ENCODE measurements at regions of chr18 and their contacts with region 1.

Region 1: DNA sequence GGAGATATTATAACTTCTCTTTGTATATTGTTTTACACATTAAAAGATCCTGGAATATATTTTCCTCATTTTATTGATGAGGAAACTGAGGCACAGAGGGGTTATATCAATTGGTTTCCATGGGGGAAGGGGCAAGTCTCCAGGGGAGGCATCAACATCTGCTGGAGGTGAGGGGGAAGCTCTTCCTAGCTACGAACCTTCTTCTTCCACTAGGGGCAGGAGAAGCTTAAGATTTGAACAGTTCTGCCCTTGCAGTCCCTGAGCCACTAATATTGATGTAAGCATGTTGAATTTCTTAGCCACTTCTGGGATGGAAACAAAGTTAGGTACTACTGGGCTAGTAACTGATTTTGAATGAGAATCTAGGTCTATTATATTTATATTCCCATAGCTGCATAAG is 140.1 kb upstream of the AQP4 start:
- DNase-seq: no peak
- ATAC-seq: no peak
- H3K4me3 ChIP-seq: no peak overlapping the region
- H3K27ac ChIP-seq: no peak overlapping the region
- H3K4me1 ChIP-seq: peaks cover 0 to 2% (median 0%) of the 10 kb centered on the region in 12 donors
- H3K27me3 ChIP-seq: no peaks in the 10 kb centered on the region
- CTCF ChIP-seq: peak in 8 of 12 donors; percentile 9 to 33 (median 22)
- POLR2A ChIP-seq: no peak

Region 2: GRCh38 chr18:26621161-26622026 is 384.2 kb before region 1 on chr18:
- intact Hi-C with region 1: loop called in 1 of 10 experiments (anchors 10 kb)
- DNase-seq: peak in 3 of 5 donors; percentile 25 to 54 (median 33)
- ATAC-seq: peak in 3 of 4 donors; percentile 71 to 76 (median 75)
- H3K4me3 ChIP-seq: no peak overlapping the region
- H3K27ac ChIP-seq: no peak overlapping the region
- H3K4me1 ChIP-seq: peaks cover 0 to 2% (median 0%) of the 10 kb centered on the region in 12 donors
- H3K27me3 ChIP-seq: no peaks in the 10 kb centered on the region
- CTCF ChIP-seq: peak; percentile 49 to 70 (median 62)
- POLR2A ChIP-seq: no peak

Region 3: GRCh38 chr18:26642440-26643348 is 362.9 kb before region 1 on chr18:
- intact Hi-C with region 1: loop called in 1 of 10 experiments (anchors 10 kb)
- DNase-seq: no peak
- ATAC-seq: no peak
- H3K4me3 ChIP-seq: no peak overlapping the region
- H3K27ac ChIP-seq: no peak overlapping the region
- H3K4me1 ChIP-seq: peaks cover 0 to 18% (median 0%) of the 10 kb centered on the region in 12 donors
- H3K27me3 ChIP-seq: no peaks in the 10 kb centered on the region
- CTCF ChIP-seq: no peak
- POLR2A ChIP-seq: no peak

Region 4: DNA sequence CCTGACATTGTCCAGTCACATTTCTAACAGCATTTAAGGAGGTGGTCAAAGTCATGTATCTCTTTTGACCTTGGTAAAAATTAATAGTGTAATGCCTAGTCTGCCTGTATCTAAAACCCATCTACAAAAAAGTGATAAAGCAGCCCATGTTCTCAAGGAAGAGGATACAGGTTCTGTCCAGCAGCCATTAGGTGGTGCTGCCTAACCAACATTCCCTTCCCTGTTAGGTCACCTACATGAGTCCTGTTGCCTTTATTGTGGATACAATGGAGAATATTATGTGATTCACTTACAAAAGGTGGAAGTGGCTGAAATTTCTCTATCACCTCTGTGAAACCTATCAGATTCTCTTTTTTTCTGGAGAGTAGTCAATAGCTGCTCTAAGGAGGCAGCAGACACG is 192.5 kb before region 1 on chr18:
- intact Hi-C with region 1: loop called in 9 of 10 experiments (anchors 2 to 10 kb)
- DNase-seq: peak in 2 of 5 donors; percentile 22 to 25
- ATAC-seq: peak in 2 of 4 donors; percentile 74 to 75
- H3K4me3 ChIP-seq: no peak overlapping the region
- H3K27ac ChIP-seq: no peak overlapping the region
- H3K4me1 ChIP-seq: no peaks in the 10 kb centered on the region
- H3K27me3 ChIP-seq: peaks cover 0 to 7% (median 0%) of the 10 kb centered on the region in 9 donors
- CTCF ChIP-seq: peak; percentile 37 to 67 (median 58)
- POLR2A ChIP-seq: no peak

Region 5: DNA sequence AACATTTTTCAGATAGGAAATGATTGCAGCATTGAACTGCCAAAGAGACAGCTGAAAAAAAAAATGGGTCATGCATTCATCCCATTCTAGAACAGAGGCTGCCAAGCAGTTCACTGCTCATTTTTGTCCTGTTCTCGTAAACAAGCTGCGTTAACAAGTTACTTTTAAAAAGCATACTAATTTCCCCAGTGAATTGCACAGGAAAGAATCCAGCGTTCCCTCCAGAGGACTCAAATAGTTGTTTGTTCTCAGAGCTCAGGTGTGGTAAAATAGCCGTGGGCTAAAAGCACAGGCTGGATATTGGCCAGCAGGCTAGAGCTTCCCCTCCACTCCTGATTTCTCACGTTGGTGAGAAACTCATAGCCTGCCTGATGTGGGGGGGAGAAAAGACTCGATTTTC is 64.0 kb before region 1 on chr18:
- intact Hi-C with region 1: loop called in 1 of 10 experiments (anchors 10 kb)
- DNase-seq: no peak
- ATAC-seq: no peak
- H3K4me3 ChIP-seq: no peak overlapping the region
- H3K27ac ChIP-seq: no peak overlapping the region
- H3K4me1 ChIP-seq: peaks cover 0 to 13% (median 0%) of the 10 kb centered on the region in 12 donors
- H3K27me3 ChIP-seq: no peaks in the 10 kb centered on the region
- CTCF ChIP-seq: no peak
- POLR2A ChIP-seq: no peak

Region 6: GRCh38 chr18:27298214-27298804 is 292.7 kb after region 1 on chr18:
- intact Hi-C with region 1: loop called in 1 of 10 experiments (anchors 2 kb)
- DNase-seq: no peak
- ATAC-seq: peak in 3 of 4 donors; percentile 52 to 67 (median 65)
- H3K4me3 ChIP-seq: no peak overlapping the region
- H3K27ac ChIP-seq: no peak overlapping the region
- H3K4me1 ChIP-seq: no peaks in the 10 kb centered on the region
- H3K27me3 ChIP-seq: no peaks in the 10 kb centered on the region
- CTCF ChIP-seq: peak in 11 of 12 donors; percentile 15 to 56 (median 46)
- POLR2A ChIP-seq: no peak

Region 7: DNA sequence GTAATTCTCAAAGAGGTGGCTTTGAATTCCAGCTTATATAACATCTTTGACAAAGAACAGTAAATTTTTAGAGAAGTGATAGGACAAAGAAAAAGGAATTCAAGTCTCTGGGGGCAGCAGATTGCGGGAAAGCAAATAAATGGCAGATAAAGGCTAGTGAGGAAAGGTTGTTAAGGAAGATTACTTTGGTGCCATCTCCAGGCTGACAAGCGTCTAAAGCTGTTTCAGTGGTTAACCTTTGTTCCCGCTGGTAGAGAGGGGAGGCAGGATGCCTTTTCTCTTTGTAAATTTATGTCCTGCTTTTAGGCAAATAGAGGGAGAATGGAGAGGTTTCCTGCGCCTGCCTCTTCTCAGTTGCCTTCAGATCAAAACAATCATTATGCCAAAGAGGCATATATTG is 610.7 kb after region 1 on chr18:
- intact Hi-C with region 1: no loop called
- DNase-seq: no peak
- ATAC-seq: no peak
- H3K4me3 ChIP-seq: no peak overlapping the region
- H3K27ac ChIP-seq: no peak overlapping the region
- H3K4me1 ChIP-seq: peaks cover 0 to 8% (median 0%) of the 10 kb centered on the region in 12 donors
- H3K27me3 ChIP-seq: no peaks in the 10 kb centered on the region
- CTCF ChIP-seq: no peak
- POLR2A ChIP-seq: no peak

Measured in heart left ventricle (tissue), 16 donors.